Dendritic cell treated with granulocyte-macrophage colony-stimulating factor and Interleukin-4, amounts not matched to agents 40 ng/mL and 50 ng/mL, for 4 days (primary cell): ENCODE measurements at regions of chr9 and their contacts with region 1.

Region 1: GRCh38 chr9:75333624-75334023 is 245.3 kb downstream of the OSTF1 start:
- H3K4me3 Mint-ChIP-seq: no peak overlapping the region
- H3K27ac Mint-ChIP-seq: no peak overlapping the region
- H3K4me1 Mint-ChIP-seq: no peaks in the 10 kb centered on the region
- H3K27me3 Mint-ChIP-seq: no peaks in the 10 kb centered on the region

Region 2: GRCh38 chr9:75855509-75855908 is 521.9 kb after region 1 on chr9:
- intact Hi-C with region 1: loop called (anchors 10 kb)
- H3K4me3 Mint-ChIP-seq: no peak overlapping the region
- H3K27ac Mint-ChIP-seq: no peak overlapping the region
- H3K4me1 Mint-ChIP-seq: no peaks in the 10 kb centered on the region
- H3K27me3 Mint-ChIP-seq: no peaks in the 10 kb centered on the region